ENCODE measurements at regions of chr11 and their contacts with region 1.

Region 1: GRCh38 chr11:121194731-121195596 is 93.9 kb downstream of the TECTA start:
- DNase-seq: peak; percentile 69
- CTCF ChIP-seq: peak; percentile 76

Region 2: GRCh38 chr11:120912504-120912903 is 282.5 kb before region 1 on chr11:
- CTCF ChIA-PET with region 1: interaction called, 13 read pairs
- POLR2A ChIA-PET with region 1: no interaction called
- DNase-seq: peak; percentile 53
- CTCF ChIP-seq: peak; percentile 36

Region 3: DNA sequence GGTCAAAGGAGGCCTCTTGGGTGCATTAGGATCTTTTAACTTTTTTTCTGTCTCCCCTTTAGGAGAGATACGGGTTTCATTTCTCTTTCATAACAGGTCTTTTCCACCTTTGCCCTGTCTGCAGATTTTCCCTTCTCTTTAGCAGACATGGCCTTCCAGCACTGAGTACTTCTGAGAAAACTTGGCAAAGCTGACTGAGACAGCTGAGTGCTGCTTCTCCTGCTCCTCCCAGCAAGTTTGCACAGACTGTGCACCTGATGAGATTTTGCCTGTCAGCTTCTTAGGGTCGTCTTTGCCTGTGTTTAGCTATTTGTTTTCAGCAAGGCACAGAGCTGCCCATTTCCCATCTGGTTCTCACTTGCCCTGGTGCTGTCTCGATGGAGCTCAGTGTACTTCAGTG is 258.6 kb before region 1 on chr11:
- CTCF ChIA-PET with region 1: interaction called, 17 read pairs
- POLR2A ChIA-PET with region 1: no interaction called
- DNase-seq: no peak
- CTCF ChIP-seq: no peak

Region 4: GRCh38 chr11:121179306-121179705 is 15.7 kb before region 1 on chr11:
- CTCF ChIA-PET with region 1: interaction called, 22 read pairs
- POLR2A ChIA-PET with region 1: no interaction called
- DNase-seq: no peak
- CTCF ChIP-seq: no peak

Region 5: GRCh38 chr11:121207485-121208115 is 12.6 kb after region 1 on chr11:
- CTCF ChIA-PET with region 1: interaction called, 19 read pairs
- POLR2A ChIA-PET with region 1: no interaction called
- DNase-seq: peak; percentile 38
- CTCF ChIP-seq: no peak

Region 6: GRCh38 chr11:121318848-121319834 is 124.2 kb after region 1 on chr11:
- CTCF ChIA-PET with region 1: no interaction called
- POLR2A ChIA-PET with region 1: no interaction called
- DNase-seq: no peak
- CTCF ChIP-seq: peak; percentile 84

Region 7: GRCh38 chr11:121358760-121359159 is 163.8 kb after region 1 on chr11:
- CTCF ChIA-PET with region 1: no interaction called
- POLR2A ChIA-PET with region 1: no interaction called
- DNase-seq: no peak
- CTCF ChIP-seq: no peak

Region 8: GRCh38 chr11:121572571-121573059 is 377.7 kb after region 1 on chr11:
- CTCF ChIA-PET with region 1: no interaction called
- POLR2A ChIA-PET with region 1: no interaction called
- DNase-seq: no peak
- CTCF ChIP-seq: no peak